ENCODE measurements at regions of chrX and their contacts with region 1.

Region 1: GRCh38 chrX:110407910-110408545 is 49.4 kb downstream of the RTL9 start:
- DNase-seq: peak; percentile 10
- H3K4me3 Mint-ChIP-seq: no peak overlapping the region
- H3K27ac Mint-ChIP-seq: no peak overlapping the region
- H3K4me1 Mint-ChIP-seq: peaks cover 4% of the 10 kb centered on the region
- H3K27me3 Mint-ChIP-seq: peaks cover 2% of the 10 kb centered on the region

Region 2: DNA sequence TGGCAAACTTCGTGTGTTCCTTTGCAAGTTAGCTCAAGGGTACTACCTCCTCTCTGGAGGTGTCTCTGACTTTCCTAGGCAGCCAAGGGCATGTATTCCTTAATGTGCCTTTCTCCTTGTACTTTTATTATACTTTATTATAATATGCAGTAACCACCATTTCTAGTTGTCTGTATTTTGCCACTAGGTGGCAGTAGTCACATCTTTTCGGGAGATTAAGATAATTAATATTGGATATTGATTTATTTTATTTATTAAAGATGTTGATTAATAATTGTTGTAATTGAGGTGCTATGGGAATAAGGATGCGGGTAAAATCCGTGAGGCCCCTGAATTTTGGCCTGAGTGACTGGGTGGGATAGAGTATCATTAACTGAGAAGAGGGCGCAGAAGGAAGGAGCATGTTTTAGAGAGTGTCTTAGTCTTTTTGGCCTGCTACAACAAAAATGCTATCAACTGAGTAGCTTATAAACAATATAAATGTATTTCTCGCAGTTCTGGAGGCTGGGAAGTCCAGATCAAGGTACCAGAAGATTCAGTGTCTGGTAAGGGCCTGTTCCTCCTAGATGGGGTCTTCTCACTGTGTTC is 251.8 kb before region 1 on chrX:
- intact Hi-C with region 1: loop called (anchors 1 kb)
- DNase-seq: no peak
- H3K4me3 Mint-ChIP-seq: no peak overlapping the region
- H3K27ac Mint-ChIP-seq: no peak overlapping the region
- H3K4me1 Mint-ChIP-seq: peaks cover 11% of the 10 kb centered on the region
- H3K27me3 Mint-ChIP-seq: no peaks in the 10 kb centered on the region

Region 3: GRCh38 chrX:110504947-110505346 is 96.9 kb after region 1 on chrX:
- intact Hi-C with region 1: no loop called
- DNase-seq: no peak
- H3K4me3 Mint-ChIP-seq: no peak overlapping the region
- H3K27ac Mint-ChIP-seq: no peak overlapping the region
- H3K4me1 Mint-ChIP-seq: no peaks in the 10 kb centered on the region
- H3K27me3 Mint-ChIP-seq: no peaks in the 10 kb centered on the region

Region 4: DNA sequence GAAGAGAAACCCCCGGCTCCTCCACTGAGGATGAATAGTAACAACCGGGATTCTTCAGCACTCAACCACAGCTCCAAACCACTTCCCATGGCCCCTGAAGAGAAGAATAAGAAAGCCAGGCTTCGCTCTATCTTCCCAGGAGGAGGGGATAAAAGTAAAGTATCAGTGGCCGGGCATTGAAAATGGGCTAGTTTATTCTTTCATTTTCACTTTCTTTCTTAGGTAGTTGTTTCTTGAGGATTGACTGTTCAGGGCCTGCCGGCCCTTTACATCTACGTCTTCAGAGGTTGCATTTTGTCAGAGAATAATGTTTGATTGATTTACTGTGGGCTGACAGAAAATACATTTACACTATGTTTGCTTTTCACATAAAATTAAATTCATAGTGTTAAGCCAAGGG is 715.1 kb after region 1 on chrX:
- intact Hi-C with region 1: no loop called
- DNase-seq: no peak
- H3K4me3 Mint-ChIP-seq: peak overlapping the region; percentile 66
- H3K27ac Mint-ChIP-seq: peak overlapping the region; percentile 89
- H3K4me1 Mint-ChIP-seq: peaks cover 26% of the 10 kb centered on the region
- H3K27me3 Mint-ChIP-seq: no peaks in the 10 kb centered on the region